A673 (cell line): ENCODE measurements at regions of chr3 and their contacts with region 1.

Region 1: GRCh38 chr3:33152363-33153360 is 38.8 kb downstream of the CRTAP start:
- DNase-seq: no peak
- H3K4me3 ChIP-seq: no peak overlapping the region
- H3K27ac ChIP-seq: no peak overlapping the region
- H3K4me1 ChIP-seq: peaks cover 5% of the 10 kb centered on the region
- H3K27me3 ChIP-seq: no peaks in the 10 kb centered on the region
- CTCF ChIP-seq: no peak

Region 2: DNA sequence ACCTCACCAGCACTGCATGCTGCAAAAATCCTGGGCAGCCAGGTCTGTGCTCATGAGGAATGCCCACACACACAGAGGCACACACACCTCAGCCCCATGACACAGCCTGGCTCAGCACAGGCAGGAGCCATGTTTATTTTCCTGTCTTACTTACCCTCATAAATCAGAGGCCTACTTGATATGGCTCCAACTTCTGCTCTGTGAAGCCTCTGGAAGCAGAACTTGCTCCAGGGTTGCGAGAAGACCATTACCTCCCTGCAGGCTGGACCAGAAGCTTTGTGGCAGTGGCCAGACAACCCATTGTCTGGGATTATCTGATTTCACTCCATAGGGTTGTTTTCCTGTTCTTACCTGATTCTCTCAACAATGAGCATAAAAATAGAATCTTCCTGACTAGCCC is 958.0 kb before region 1 on chr3:
- CTCF ChIA-PET with region 1: no interaction called
- POLR2A ChIA-PET with region 1: no interaction called
- intact Hi-C with region 1: no loop called
- DNase-seq: no peak
- H3K4me3 ChIP-seq: no peak overlapping the region
- H3K27ac ChIP-seq: no peak overlapping the region
- H3K4me1 ChIP-seq: no peaks in the 10 kb centered on the region
- H3K27me3 ChIP-seq: no peaks in the 10 kb centered on the region
- CTCF ChIP-seq: no peak

Region 3: DNA sequence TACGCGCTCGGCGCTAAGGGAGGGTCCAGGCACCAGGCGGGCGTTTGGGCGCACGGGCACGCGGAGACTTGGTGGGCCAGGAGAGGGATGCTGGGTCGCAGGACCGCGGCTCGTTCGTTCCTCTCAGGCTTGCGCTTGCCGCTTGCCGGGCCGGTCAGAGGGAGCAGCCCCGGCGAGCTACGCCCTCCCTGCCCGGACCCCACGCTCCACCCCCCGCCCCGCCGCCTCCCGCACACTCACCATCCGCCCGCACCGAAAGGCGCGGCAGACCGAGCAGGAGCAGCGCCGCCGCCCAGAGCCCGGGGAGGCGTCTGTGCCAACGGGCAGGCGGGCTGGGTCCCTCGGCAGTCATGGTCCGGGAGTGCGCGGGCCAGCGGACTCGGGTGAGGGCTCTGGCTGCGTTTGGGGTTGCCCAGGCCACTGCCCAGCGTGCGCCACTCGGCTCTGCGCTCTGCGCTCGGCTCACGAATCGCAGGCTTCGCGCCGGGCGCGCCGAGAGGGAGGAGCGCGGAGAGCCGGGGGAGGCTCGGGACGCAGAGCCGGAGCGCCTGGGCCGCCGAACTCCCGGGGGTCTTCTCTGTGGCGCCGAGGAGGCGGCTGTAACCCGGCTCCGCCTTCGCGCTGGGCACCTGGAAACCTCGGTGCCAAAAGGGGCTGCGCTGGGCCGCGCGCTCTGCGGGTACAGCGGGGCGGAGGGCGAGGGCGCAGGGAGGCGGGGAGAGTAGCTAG is 65.9 kb after region 1 on chr3 and contains the start of gene SUSD5:
- CTCF ChIA-PET with region 1: no interaction called
- POLR2A ChIA-PET with region 1: no interaction called
- intact Hi-C with region 1: loop called (anchors 10 kb)
- DNase-seq: peak; percentile 55
- H3K4me3 ChIP-seq: peak within 1 kb of the TSS; percentile 45
- H3K27ac ChIP-seq: no peak within 1 kb of the TSS
- H3K4me1 ChIP-seq: peaks cover 6% of the 10 kb centered on the region
- H3K27me3 ChIP-seq: peaks cover 47% of the 10 kb centered on the region
- CTCF ChIP-seq: no peak
- total RNA-seq, gene SUSD5: 0.97 and 1.0 TPM in 2 replicates